ENCODE measurements at regions of chr7 and their contacts with region 1.

Region 1: GRCh38 chr7:36366718-36367560 is 22.7 kb upstream of the ANLN start:
- DNase-seq: peak; percentile 77 to 94 (median 90)
- H3K4me3 ChIP-seq: peak overlapping the region; percentile 67 to 97 (median 85)
- H3K27ac ChIP-seq: peak overlapping the region in 58 of 59 donors; percentile 16 to 93 (median 80)
- H3K27me3 ChIP-seq: no peaks in the 10 kb centered on the region
- CTCF ChIP-seq: peak; percentile 74 to 98 (median 91)

Region 2: DNA sequence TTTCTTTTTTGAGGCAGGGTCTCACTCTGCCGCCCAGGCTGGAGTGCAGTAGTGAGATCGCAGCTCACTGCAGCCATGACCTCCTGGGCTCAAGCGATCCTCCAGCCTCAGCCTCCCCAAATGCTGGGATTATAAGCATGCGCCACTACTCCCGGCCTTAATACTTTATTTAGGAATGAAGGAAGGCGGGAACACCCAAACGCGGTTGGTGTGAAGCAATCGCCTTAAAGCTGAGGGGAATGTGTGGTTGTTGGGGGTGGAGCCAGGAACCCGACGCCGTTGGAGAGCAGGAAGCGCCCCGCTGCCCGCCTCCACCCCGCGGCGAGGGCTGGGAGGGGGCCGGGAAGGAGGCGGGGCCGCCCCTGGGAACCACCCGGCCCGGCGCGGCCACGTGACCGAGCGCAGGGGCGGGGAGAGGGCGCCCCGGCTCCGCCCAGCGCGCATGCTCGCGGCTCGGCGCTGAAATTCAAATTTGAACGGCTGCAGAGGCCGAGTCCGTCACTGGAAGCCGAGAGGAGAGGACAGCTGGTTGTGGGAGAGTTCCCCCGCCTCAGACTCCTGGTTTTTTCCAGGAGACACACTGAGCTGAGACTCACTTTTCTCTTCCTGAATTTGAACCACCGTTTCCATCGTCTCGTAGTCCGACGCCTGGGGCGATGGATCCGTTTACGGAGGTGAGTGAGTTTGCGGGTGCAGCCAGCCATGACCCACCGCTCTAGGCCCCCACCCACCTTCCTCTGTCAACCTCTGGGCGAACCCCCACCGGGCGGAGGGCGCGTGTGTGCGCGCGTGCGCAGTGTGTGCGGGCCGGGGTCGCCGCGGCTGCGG is 22.6 kb after region 1 on chr7 and contains the start of gene ANLN:
- intact Hi-C with region 1: loop called in 1 of 2 experiments (anchors 2 kb)
- DNase-seq: peak; percentile 77 to 96 (median 88)
- H3K4me3 ChIP-seq: peak within 1 kb of the TSS; percentile 52 to 87 (median 72)
- H3K27ac ChIP-seq: peak within 1 kb of the TSS; percentile 53 to 95 (median 86)
- H3K27me3 ChIP-seq: peaks cover 0 to 7% (median 0%) of the 10 kb centered on the region in 45 donors
- CTCF ChIP-seq: peak in 11 of 56 donors; percentile 4 to 36 (median 20)
- total RNA-seq, gene ANLN: 26.6 to 509 (median 114) TPM

Region 3: DNA sequence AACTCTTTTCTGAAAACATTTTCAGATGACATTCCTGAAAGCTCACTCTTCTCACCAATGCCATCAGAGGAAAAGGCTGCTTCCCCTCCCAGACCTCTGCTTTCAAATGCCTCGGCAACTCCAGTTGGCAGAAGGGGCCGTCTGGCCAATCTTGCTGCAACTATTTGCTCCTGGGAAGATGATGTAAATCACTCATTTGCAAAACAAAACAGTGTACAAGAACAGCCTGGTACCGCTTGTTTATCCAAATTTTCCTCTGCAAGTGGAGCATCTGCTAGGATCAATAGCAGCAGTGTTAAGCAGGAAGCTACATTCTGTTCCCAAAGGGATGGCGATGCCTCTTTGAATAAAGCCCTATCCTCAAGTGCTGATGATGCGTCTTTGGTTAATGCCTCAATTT is 39.2 kb after region 1 on chr7:
- intact Hi-C with region 1: loop called in 1 of 2 experiments (anchors 5 kb)
- DNase-seq: peak; percentile 10 to 88 (median 70)
- H3K4me3 ChIP-seq: peak overlapping the region; percentile 19 to 81 (median 56)
- H3K27ac ChIP-seq: peak overlapping the region; percentile 8 to 99 (median 91)
- H3K27me3 ChIP-seq: no peaks in the 10 kb centered on the region
- CTCF ChIP-seq: peak in 4 of 56 donors; percentile 14 to 26 (median 20)

Region 4: GRCh38 chr7:37068038-37068437 is 701.1 kb after region 1 on chr7:
- intact Hi-C with region 1: no loop called
- DNase-seq: no peak
- H3K4me3 ChIP-seq: no peak overlapping the region
- H3K27ac ChIP-seq: peak overlapping the region in 11 of 59 donors; percentile 13 to 74 (median 60)
- H3K27me3 ChIP-seq: no peaks in the 10 kb centered on the region
- CTCF ChIP-seq: no peak

Measured in dorsolateral prefrontal cortex (tissue), 120 donors.